ENCODE measurements at regions of chr10 and their contacts with region 1.

Region 1: GRCh38 chr10:119489991-119490326 is 52.6 kb downstream of the RGS10 start:
- DNase-seq: no peak
- H3K4me3 Mint-ChIP-seq: peak overlapping the region; percentile 74
- H3K27ac Mint-ChIP-seq: peak overlapping the region; percentile 89
- H3K4me1 Mint-ChIP-seq: peaks cover 59% of the 10 kb centered on the region
- H3K27me3 Mint-ChIP-seq: no peaks in the 10 kb centered on the region

Region 2: GRCh38 chr10:119415536-119416503 is 74.1 kb before region 1 on chr10:
- CTCF ChIA-PET with region 1: no interaction called
- DNase-seq: no peak
- H3K4me3 Mint-ChIP-seq: no peak overlapping the region
- H3K27ac Mint-ChIP-seq: no peak overlapping the region
- H3K4me1 Mint-ChIP-seq: no peaks in the 10 kb centered on the region
- H3K27me3 Mint-ChIP-seq: no peaks in the 10 kb centered on the region

Region 3: GRCh38 chr10:119478111-119478802 is 11.7 kb before region 1 on chr10:
- CTCF ChIA-PET with region 1: interaction called, 10 read pairs
- DNase-seq: peak; percentile 46
- H3K4me3 Mint-ChIP-seq: peak overlapping the region; percentile 21
- H3K27ac Mint-ChIP-seq: peak overlapping the region; percentile 83
- H3K4me1 Mint-ChIP-seq: peaks cover 36% of the 10 kb centered on the region
- H3K27me3 Mint-ChIP-seq: peaks cover 36% of the 10 kb centered on the region